Heart right ventricle (tissue), 16 donors: ENCODE measurements at regions of chr6 and their contacts with region 1.

Region 1: DNA sequence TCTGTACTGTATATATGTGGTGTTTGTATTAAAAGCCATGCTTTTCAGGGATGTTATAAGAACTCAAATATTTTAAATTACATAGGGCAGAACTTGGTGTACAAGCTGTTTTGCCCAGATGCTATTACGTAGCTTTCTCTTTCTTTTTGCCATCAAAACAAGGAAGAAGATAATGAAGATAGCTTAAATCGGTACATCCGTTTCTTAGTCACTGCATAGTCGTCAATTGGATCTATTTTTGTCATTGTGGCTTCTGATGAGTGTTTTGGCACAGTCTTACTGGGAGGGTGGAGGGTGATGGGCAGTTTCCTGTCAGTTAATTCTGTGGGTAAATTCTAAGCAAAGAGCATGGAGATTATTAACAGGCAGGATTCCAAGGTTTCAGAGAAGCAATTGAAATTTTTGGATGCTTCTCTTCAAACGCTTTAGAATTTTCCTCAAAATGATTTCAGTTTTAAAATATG is 649.1 kb upstream of the GJE1 start:
- DNase-seq: peak in 1 of 2 donors; percentile 48
- ATAC-seq: peak; percentile 79 to 98 (median 95)
- H3K4me3 ChIP-seq: peak overlapping the region in 6 of 10 donors; percentile 9 to 45 (median 39)
- H3K27ac ChIP-seq: peak overlapping the region; percentile 5 to 83 (median 61)
- H3K4me1 ChIP-seq: peaks cover 0 to 36% (median 25%) of the 10 kb centered on the region in 9 donors
- H3K27me3 ChIP-seq: no peaks in the 10 kb centered on the region
- CTCF ChIP-seq: no peak

Region 2: GRCh38 chr6:141541581-141542324 is 58.1 kb after region 1 on chr6:
- intact Hi-C with region 1: loop called in 1 of 10 experiments (anchors 10 kb)
- DNase-seq: no peak
- ATAC-seq: no peak
- H3K4me3 ChIP-seq: no peak overlapping the region
- H3K27ac ChIP-seq: no peak overlapping the region
- H3K4me1 ChIP-seq: no peaks in the 10 kb centered on the region
- H3K27me3 ChIP-seq: no peaks in the 10 kb centered on the region
- CTCF ChIP-seq: no peak

Region 3: DNA sequence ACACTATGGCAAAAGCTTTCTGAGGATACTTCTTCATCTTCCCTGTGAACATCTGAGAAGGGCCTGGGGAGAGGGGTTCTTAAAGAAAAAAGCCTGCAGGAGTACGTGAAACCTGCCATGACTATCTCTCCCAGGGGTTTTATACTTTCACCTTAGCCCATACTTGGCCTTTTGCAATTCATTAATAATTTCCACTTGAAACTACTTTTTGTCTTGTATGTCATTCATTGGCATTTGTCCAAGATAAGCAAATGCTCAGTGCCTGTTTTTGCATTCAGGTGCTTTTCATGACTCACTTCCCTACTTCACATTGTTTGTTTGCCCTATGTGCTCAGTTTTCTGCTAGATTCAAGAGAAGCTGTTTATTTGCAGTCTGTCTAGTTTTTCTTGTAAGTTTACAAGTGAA is 68.8 kb after region 1 on chr6:
- intact Hi-C with region 1: loop called in 3 of 10 experiments (anchors 5 to 10 kb)
- DNase-seq: peak in 1 of 2 donors; percentile 14
- ATAC-seq: peak in 6 of 8 donors; percentile 52 to 94 (median 68)
- H3K4me3 ChIP-seq: no peak overlapping the region
- H3K27ac ChIP-seq: peak overlapping the region in 9 of 10 donors; percentile 7 to 74 (median 43)
- H3K4me1 ChIP-seq: peaks cover 0 to 20% (median 6%) of the 10 kb centered on the region in 9 donors
- H3K27me3 ChIP-seq: no peaks in the 10 kb centered on the region
- CTCF ChIP-seq: no peak

Region 4: DNA sequence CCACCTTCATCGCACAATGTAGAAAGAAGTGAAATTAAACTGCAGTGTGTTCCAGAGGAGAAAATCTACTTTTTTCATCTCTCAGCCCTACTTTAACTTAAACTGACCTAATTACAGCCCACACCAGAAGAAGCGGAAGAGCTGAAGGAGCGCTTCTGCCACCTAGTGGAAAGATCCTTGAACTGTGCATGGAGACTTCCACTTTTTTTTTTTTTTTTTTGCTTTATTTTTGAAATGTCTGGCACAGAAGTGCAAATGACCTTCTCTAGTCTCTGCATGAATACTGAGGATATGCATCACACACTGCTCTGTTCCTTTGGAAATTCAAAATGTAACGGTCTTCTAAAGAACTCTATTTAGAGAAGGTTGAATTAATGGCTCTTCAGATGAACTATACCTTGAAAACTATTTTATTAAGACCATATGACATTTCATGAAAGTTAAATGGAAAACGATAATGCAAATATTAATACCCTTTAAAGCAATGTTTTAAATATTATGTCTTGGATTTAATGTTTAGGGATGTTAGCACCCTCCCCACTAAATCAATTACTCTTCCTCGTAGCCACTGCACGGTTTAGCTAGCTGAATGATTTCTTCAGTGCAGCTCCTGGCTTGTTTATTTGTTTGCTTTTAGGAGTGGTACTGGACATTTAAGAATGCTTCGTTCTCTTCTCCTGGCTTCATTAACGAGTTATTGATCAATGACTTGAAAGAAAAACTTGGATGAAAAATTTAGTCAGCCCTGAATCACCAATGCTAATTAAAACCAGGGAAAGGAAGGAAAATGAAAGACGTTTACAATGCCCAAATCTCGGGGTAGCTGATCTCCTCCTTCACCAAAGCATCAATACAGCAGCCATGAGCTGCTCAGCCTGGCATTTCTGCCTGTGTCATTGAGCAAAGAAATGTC is 79.5 kb after region 1 on chr6:
- intact Hi-C with region 1: loop called in 1 of 10 experiments (anchors 1 kb)
- DNase-seq: peak; percentile 23 to 72
- ATAC-seq: peak; percentile 89 to 96 (median 94)
- H3K4me3 ChIP-seq: peak overlapping the region; percentile 14 to 53 (median 38)
- H3K27ac ChIP-seq: peak overlapping the region; percentile 63 to 91 (median 76)
- H3K4me1 ChIP-seq: peaks cover 0 to 23% (median 9%) of the 10 kb centered on the region in 9 donors
- H3K27me3 ChIP-seq: no peaks in the 10 kb centered on the region
- CTCF ChIP-seq: peak; percentile 83 to 92 (median 88)